AG04449 (cell line): ENCODE measurements at regions of chr2 and their contacts with region 1.

Region 1: GRCh38 chr2:38233231-38233983 is 143.7 kb downstream of the ATL2 start:
- DNase-seq: peak; percentile 9
- H3K4me3 ChIP-seq: no peak overlapping the region
- CTCF ChIP-seq: peak; percentile 30

Region 2: DNA sequence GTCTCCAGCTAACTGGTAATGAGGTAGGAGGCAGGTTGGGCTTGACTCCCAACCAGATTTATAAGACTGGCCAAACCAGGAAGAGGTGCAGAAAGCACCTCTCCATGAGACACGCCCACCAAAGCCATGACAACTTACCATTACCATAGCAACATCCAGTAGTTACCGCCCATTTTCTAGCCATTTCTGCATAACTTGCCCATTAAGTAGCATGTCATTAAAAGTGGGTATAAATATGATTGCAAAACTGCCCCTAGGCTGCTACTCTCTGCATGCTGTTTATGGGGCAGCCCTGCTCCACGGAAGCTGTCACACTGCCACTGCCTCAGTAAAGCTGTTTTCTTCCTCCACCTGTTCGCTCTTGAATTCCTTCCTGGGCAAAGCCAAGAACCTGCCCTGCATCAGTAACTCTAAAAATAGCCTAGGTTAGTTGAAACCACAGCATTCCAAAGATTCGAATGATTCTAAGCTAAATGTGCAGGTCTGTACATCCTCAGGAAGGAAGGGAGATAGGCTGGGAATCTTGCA is 11.8 kb after region 1 on chr2:
- CTCF ChIA-PET with region 1: interaction called, 10 read pairs
- POLR2A ChIA-PET with region 1: no interaction called
- DNase-seq: no peak
- H3K4me3 ChIP-seq: no peak overlapping the region
- CTCF ChIP-seq: no peak

Region 3: GRCh38 chr2:38948995-38949394 is 715.6 kb after region 1 on chr2:
- CTCF ChIA-PET with region 1: no interaction called
- POLR2A ChIA-PET with region 1: no interaction called
- DNase-seq: no peak
- H3K4me3 ChIP-seq: no peak overlapping the region
- CTCF ChIP-seq: no peak